Motor neuron (in vitro differentiated cells): ENCODE measurements at regions of chr4 and their contacts with region 1.

Region 1: DNA sequence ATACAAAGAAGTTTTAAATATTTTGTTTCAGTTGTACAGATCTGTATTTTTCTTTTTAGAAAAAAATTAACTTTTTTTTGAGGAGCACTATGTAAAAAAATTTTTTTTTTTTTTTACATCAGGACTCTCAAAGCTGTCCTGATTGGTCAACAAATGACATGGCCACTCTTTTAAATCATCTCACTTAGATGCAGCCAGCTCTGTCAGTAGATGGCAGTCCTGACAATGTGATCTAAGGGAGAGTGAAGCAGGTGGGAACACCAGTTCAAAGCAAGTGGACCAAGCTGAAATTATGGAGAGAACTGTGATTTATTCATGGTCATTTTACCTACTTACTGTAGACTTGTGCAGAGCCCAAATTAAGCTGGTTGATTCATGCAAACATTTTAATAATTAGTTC is 174.6 kb upstream of the GPRIN3 start:
- ATAC-seq: peak in 4 of 8 experiments; percentile 40 to 79 (median 71)
- H3K4me3 ChIP-seq: no peak overlapping the region
- H3K27ac ChIP-seq: no peak overlapping the region
- H3K4me1 ChIP-seq: no peaks in the 10 kb centered on the region

Region 2: GRCh38 chr4:89110986-89111832 is 371.0 kb before region 1 on chr4 and contains the start of gene TIGD2:
- in situ Hi-C with region 1: no loop called
- ATAC-seq: peak; percentile 88 to 95 (median 94)
- H3K4me3 ChIP-seq: peak within 1 kb of the TSS; percentile 69 to 97 (median 88)
- H3K27ac ChIP-seq: peak within 1 kb of the TSS; percentile 76
- H3K4me1 ChIP-seq: peaks cover 0 to 8% of the 10 kb centered on the region in 2 donors
- total RNA-seq, gene TIGD2: 7.4 to 14.2 (median 10.8) TPM

Region 3: DNA sequence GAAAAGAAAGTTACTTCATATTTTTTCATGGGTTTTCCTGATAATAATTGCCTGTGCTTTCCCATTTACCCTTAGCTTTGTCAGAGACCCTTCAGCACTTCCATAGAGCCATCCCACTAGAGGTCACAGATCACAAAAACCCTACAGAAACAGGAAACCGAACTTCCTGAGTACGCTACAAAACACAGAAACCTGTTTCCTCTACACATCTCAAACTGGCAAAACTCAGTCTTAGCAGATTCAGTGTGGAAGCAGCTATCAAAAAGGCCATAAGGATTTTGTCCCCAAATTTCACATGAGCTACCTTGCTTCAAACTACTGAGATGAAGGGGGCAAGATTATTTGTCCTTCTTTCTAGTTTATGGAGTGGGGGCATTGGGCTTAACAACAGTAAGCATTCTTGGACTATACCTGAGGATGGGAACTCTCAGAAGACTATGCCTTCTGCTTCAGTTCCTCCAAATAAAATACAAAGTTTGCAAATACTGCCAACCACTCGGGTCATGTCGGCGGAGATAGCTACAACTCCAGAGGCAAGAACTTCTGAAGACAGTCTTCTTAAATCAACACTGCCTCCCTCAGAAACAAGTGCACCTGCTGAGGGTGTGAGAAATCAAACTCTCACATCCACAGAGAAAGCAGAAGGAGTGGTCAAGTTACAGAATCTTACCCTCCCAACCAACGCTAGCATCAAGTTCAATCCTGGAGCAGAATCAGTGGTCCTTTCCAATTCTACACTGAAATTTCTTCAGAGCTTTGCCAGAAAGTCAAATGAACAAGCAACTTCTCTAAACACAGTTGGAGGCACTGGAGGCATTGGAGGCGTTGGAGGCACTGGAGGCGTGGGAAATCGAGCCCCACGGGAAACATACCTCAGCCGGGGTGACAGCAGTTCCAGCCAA is 412.7 kb after region 1 on chr4 and contains the start of gene MMRN1:
- in situ Hi-C with region 1: loop called in 2 of 9 experiments (anchors 25 kb)
- ATAC-seq: no peak
- H3K4me3 ChIP-seq: no peak within 1 kb of the TSS
- H3K27ac ChIP-seq: no peak within 1 kb of the TSS
- H3K4me1 ChIP-seq: no peaks in the 10 kb centered on the region
- total RNA-seq, gene MMRN1: 0.07 to 17.1 (median 0.79) TPM in 6 of 8 experiments, not detected in the others

Region 4: GRCh38 chr4:89914609-89915550 is 432.6 kb after region 1 on chr4:
- in situ Hi-C with region 1: loop called in 1 of 9 experiments (anchors 25 kb)
- ATAC-seq: peak in 3 of 8 experiments; percentile 62 to 85 (median 70)
- H3K4me3 ChIP-seq: no peak overlapping the region
- H3K27ac ChIP-seq: peak overlapping the region in 1 of 2 donors; percentile 3
- H3K4me1 ChIP-seq: peaks cover 10 to 30% of the 10 kb centered on the region in 2 donors